ENCODE measurements at regions of chr11 and their contacts with region 1.

Region 1: GRCh38 chr11:68889948-68890446 is 13.6 kb downstream of the MRPL21 start:
- DNase-seq: peak; percentile 71 to 90
- ATAC-seq: peak; percentile 89
- H3K4me3 ChIP-seq: no peak overlapping the region
- H3K27ac ChIP-seq: peak overlapping the region in 1 of 2 donors; percentile 70
- H3K4me1 ChIP-seq: no peaks in the 10 kb centered on the region
- H3K27me3 ChIP-seq: no peaks in the 10 kb centered on the region

Region 2: GRCh38 chr11:68839054-68839865 is 50.7 kb before region 1 on chr11:
- intact Hi-C with region 1: loop called (anchors 5 kb)
- DNase-seq: peak; percentile 97 to 99
- ATAC-seq: peak; percentile 92
- H3K4me3 ChIP-seq: peak overlapping the region; percentile 10 to 31
- H3K27ac ChIP-seq: peak overlapping the region; percentile 62 to 88
- H3K4me1 ChIP-seq: no peaks in the 10 kb centered on the region
- H3K27me3 ChIP-seq: no peaks in the 10 kb centered on the region

Measured in aorta (tissue), 5 donors.